ENCODE measurements at regions of chr5 and their contacts with region 1.

Region 1: GRCh38 chr5:157528036-157528632 is 47.4 kb downstream of the ADAM19 start:
- DNase-seq: no peak
- H3K4me3 ChIP-seq: no peak overlapping the region
- H3K4me3 Mint-ChIP-seq: no peak overlapping the region
- H3K27ac ChIP-seq: no peak overlapping the region
- H3K27ac Mint-ChIP-seq: peak overlapping the region in 4 of 7 donors; percentile 22 to 64 (median 52)
- H3K4me1 ChIP-seq: peaks cover 48% of the 10 kb centered on the region
- H3K4me1 Mint-ChIP-seq: peaks cover 35 to 88% (median 62%) of the 10 kb centered on the region in 4 donors
- H3K27me3 ChIP-seq: no peaks in the 10 kb centered on the region
- H3K27me3 Mint-ChIP-seq: no peaks in the 10 kb centered on the region

Region 2: DNA sequence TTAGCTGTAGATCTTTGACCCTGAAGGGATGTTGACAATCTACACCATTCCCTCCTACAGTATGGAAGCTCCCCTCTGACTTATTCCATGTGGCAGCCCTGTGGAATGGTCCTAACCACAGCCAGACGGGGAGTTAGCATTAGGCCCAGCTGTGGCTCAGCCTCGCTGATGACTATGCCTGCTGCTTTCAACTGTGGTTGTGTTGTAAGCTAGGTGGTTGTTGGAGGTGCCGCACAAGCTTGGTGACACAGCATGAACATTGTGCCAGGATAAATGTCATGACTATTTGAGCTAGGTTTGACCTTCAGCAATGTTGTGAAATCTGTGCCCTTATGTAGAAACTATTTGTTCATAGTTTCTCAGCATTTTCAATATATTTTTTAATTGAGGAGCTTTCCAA is 1160.5 kb before region 1 on chr5:
- CTCF ChIA-PET with region 1: no interaction called
- POLR2A ChIA-PET with region 1: no interaction called
- intact Hi-C with region 1: no loop called
- DNase-seq: no peak
- H3K4me3 ChIP-seq: no peak overlapping the region
- H3K4me3 Mint-ChIP-seq: no peak overlapping the region
- H3K27ac ChIP-seq: no peak overlapping the region
- H3K27ac Mint-ChIP-seq: no peak overlapping the region
- H3K4me1 ChIP-seq: no peaks in the 10 kb centered on the region
- H3K4me1 Mint-ChIP-seq: no peaks in the 10 kb centered on the region
- H3K27me3 ChIP-seq: no peaks in the 10 kb centered on the region
- H3K27me3 Mint-ChIP-seq: peaks cover 0 to 3% of the 10 kb centered on the region in 2 donors

Region 3: DNA sequence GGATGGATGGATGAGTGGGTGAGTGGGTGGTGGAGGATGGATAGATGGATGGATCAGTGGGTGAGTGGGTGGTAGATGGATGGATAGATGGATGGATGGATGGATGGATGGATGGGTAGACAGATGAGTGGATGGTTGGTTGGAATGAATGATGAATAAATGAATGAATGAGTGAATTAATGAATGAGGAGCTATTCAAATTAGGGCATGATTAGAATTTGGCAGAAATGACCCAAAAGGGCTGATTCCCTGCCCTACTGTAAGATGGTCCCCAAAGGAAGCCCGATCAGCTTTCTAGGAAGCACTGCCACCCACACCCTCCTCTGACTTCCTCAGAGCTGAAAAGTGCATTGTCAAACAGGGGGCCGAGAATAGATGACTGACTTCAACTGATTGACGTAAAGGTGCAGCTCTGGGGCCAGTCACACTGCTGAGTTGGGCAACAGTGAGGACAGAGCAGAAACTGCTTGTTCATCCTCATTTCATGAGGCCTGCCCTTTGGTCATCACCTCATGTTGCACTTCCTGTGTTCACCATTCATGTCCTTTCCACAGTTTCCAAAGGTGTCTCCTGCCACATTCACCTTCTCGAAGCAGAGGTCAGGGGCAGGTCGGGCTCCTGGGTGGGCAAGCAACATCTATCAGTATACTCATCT is 33.8 kb before region 1 on chr5:
- CTCF ChIA-PET with region 1: no interaction called
- POLR2A ChIA-PET with region 1: no interaction called
- intact Hi-C with region 1: loop called (anchors 5 kb)
- DNase-seq: no peak
- H3K4me3 ChIP-seq: no peak overlapping the region
- H3K4me3 Mint-ChIP-seq: peak overlapping the region in 1 of 8 donors; percentile 10
- H3K27ac ChIP-seq: no peak overlapping the region
- H3K27ac Mint-ChIP-seq: peak overlapping the region in 4 of 7 donors; percentile 17 to 79 (median 28)
- H3K4me1 ChIP-seq: no peaks in the 10 kb centered on the region
- H3K4me1 Mint-ChIP-seq: peaks cover 0 to 6% (median 4%) of the 10 kb centered on the region in 4 donors
- H3K27me3 ChIP-seq: no peaks in the 10 kb centered on the region
- H3K27me3 Mint-ChIP-seq: no peaks in the 10 kb centered on the region